Panc1 (cell line): ENCODE measurements at regions of chr1 and their contacts with region 1.

Region 1: DNA sequence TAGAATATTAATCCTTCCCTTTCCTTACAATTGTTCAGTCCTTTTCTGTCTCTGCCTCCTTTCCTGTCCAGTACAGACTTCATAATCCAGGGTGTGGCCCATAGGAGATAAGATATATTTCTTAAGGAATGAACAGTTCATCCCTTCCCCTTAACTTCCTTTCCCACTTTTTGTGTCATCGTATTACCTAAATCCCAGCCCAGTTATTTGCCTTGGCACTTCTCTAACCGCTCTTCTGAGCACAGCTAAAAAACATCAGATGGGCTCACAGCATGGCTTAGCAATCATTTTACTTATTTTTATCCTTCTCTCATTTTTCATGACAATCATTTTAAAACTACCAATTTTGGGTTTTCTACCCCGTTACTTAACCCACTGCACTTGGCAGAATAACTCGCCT is 39.6 kb downstream of the F3 start:
- DNase-seq: no peak
- ATAC-seq: no peak
- H3K4me3 ChIP-seq: no peak overlapping the region
- H3K27ac ChIP-seq: no peak overlapping the region
- H3K4me1 ChIP-seq: no peaks in the 10 kb centered on the region
- H3K27me3 ChIP-seq: no peaks in the 10 kb centered on the region
- CTCF ChIP-seq: no peak

Region 2: GRCh38 chr1:94020731-94021579 is 481.0 kb before region 1 on chr1:
- CTCF ChIA-PET with region 1: no interaction called
- POLR2A ChIA-PET with region 1: no interaction called
- in situ Hi-C with region 1: no loop called
- intact Hi-C with region 1: no loop called
- DNase-seq: no peak
- ATAC-seq: no peak
- H3K4me3 ChIP-seq: no peak overlapping the region
- H3K27ac ChIP-seq: no peak overlapping the region
- H3K4me1 ChIP-seq: peaks cover 23% of the 10 kb centered on the region
- H3K27me3 ChIP-seq: no peaks in the 10 kb centered on the region
- CTCF ChIP-seq: no peak

Region 3: DNA sequence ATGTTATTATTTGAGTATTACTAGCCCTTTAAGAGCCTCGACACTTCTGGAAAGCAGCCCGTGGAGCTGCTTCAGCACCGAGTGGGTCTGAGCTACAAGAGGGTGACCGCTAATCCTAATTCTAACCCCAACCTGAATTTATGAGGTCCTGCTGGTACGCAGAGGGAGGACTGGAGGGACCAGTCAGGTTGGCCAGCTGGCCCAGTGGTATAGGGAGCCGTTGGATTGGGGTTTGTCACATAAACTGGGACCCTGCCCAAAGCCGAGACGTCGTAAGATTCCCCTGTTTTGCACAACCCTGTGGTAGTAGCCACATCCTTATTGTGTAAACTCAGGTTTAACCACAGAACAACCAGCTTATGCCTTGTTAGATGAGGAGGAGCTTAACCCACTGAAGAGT is 100.4 kb after region 1 on chr1:
- CTCF ChIA-PET with region 1: interaction called, 11 read pairs
- POLR2A ChIA-PET with region 1: no interaction called
- in situ Hi-C with region 1: no loop called
- intact Hi-C with region 1: no loop called
- DNase-seq: no peak
- ATAC-seq: no peak
- H3K4me3 ChIP-seq: no peak overlapping the region
- H3K27ac ChIP-seq: no peak overlapping the region
- H3K4me1 ChIP-seq: no peaks in the 10 kb centered on the region; the same call in 1 of the 2 replicates
- H3K27me3 ChIP-seq: no peaks in the 10 kb centered on the region
- CTCF ChIP-seq: no peak

Region 4: DNA sequence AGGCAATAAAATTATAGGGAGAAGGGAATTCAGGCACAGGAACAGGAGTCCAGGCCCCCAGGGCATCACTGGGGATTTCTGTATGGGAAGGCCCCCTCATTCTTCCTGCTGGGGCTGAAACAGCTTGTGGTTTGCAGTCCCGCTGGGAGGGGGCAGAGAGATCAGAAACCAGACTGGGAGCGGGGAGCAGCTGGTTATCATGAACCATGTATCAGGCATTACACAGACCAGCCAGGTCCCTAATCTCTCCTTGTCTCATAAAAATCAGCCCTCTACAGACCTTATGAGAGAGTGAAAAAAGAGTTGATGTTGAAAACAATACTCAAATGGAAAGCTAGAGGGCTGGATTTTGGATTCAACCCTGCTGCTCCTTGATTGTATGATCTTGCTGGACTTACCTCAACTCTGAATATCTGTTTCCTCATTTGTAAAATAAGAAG is 133.1 kb after region 1 on chr1:
- CTCF ChIA-PET with region 1: no interaction called
- POLR2A ChIA-PET with region 1: no interaction called
- in situ Hi-C with region 1: no loop called
- intact Hi-C with region 1: no loop called
- DNase-seq: no peak
- ATAC-seq: no peak
- H3K4me3 ChIP-seq: no peak overlapping the region
- H3K27ac ChIP-seq: no peak overlapping the region
- H3K4me1 ChIP-seq: no peaks in the 10 kb centered on the region
- H3K27me3 ChIP-seq: no peaks in the 10 kb centered on the region
- CTCF ChIP-seq: no peak

Region 5: GRCh38 chr1:94755675-94756074 is 253.7 kb after region 1 on chr1:
- CTCF ChIA-PET with region 1: no interaction called
- POLR2A ChIA-PET with region 1: no interaction called
- in situ Hi-C with region 1: no loop called
- intact Hi-C with region 1: no loop called
- DNase-seq: no peak
- ATAC-seq: no peak
- H3K4me3 ChIP-seq: no peak overlapping the region
- H3K27ac ChIP-seq: no peak overlapping the region
- H3K4me1 ChIP-seq: no peaks in the 10 kb centered on the region
- H3K27me3 ChIP-seq: no peaks in the 10 kb centered on the region
- CTCF ChIP-seq: no peak